GM13976 (cell line): ENCODE measurements at regions of chr16 and their contacts with region 1.

Region 1: GRCh38 chr16:1221628-1222552 is 3.2 kb downstream of the TPSG1 start:
- DNase-seq: no peak
- CTCF ChIP-seq: no peak

Region 2: DNA sequence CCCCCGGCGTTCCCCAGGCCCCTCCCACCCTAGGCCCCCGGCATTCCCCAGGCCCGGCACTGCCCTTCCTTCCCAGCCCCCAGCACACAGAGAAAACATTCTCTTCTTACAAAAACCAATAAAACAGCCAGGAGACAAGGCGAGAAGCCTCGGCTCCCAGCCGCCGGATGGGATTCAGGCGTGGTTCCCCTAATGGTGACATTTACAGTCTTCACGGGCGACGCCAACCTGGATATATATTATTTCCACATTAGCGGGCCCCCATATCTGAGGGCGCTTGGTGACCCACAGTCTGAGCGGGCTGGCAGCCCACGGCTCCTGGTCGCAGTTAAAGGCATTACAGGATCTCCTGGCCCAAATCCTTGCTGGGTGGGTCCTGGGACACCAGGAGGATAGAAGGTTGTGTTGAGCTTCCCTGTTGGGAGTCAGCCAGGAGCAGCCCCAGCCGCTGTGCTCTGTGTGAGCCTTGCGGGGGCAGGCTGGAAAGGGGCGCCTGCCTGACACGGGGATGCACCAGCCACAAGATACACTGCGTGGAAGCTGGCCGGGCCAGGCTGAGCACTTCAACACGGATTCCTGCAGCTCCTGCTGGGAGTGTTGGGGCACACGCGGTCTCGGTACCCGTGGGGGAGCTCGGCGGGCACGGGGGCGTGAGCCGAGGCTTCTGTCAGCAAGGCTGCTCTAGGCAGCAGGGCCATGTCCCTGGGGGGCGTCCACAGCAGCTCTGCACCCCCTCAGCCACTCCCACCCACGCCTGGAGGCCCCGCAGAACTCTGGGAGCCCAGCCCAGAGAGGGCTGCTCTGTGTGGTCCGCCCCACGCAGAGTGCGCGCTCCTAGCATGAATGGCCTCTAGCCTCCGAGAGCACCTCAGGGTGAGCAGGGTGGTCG is 334.8 kb before region 1 on chr16:
- in situ Hi-C with region 1: no loop called
- DNase-seq: no peak
- CTCF ChIP-seq: no peak

Region 3: DNA sequence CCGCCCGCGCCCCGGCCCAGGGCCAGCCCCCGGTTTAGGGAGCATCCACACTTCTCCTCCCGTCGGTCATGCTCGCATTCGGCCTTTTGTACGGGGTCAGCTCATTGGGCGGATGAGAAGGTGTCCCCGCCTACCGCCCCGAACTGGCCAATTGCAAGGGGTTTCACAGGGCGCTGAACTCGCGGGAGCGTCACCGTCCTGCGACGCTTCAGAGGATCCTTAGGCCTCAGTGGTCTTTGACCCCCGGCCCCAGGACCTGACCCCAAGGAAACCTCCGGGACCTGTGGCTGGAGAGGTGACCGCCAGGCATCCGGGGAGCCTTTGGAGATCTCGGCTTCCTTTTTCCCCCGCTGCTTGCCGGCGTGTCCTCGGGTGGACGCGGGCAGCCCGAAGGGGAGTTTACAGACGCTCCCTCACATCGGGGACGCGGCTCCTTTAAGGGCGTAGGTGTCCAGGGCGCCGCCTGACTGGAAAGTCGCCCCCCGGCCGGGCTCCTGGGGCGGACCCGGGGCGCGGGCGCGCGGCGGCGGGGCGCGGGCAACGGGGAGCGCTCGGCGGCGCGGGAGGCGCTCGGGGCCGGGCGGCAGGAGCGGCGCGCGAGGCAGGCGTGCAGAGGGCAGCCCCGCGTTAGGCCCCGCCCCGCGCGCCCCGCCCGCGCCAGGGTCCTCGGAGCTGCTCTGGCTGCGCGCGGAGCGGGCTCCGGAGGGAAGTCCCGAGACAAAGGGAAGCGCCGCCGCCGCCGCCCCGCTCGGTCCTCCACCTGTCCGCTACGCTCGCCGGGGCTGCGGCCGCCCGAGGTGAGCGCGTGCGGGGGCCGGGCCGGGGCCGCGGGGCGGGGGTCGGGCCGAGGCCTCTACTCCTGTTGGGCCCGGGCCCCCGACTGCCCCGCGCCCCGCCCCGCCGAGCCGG is 87.3 kb after region 1 on chr16 and contains the start of gene UBE2I:
- in situ Hi-C with region 1: loop called (anchors 25 kb)
- DNase-seq: peak; percentile 94
- CTCF ChIP-seq: no peak

Region 4: DNA sequence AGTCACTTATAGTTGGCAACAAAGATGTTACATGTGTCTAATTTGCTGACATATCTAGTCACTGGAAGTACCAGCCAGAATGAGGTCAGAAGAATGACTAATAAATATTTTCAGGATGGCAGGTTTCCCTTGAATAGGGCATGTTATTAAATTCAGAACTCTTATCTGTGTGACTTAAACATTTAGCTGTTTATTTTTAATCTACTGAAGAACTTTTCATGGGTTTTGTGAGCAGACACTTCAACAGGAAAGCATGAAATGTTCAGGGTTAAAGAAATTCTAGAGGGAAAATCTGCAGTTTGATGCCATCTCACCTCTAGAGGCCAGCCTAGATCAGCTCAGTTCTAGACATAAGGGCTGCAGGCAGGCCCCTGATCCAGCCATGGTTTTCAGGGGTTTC is 469.4 kb after region 1 on chr16:
- in situ Hi-C with region 1: no loop called
- DNase-seq: no peak
- CTCF ChIP-seq: no peak